MCF 10A (cell line): ENCODE measurements at regions of chr10 and their contacts with region 1.

Region 1: GRCh38 chr10:74151056-74151878 is at the start of gene ADK:
- DNase-seq: peak; percentile 98
- H3K4me3 Mint-ChIP-seq: no peak within 1 kb of the TSS
- H3K27ac Mint-ChIP-seq: no peak within 1 kb of the TSS
- H3K4me1 Mint-ChIP-seq: peaks cover 28% of the 10 kb centered on the region
- H3K27me3 Mint-ChIP-seq: no peaks in the 10 kb centered on the region
- CTCF ChIP-seq: peak; percentile 25
- total RNA-seq, gene ADK: 96.6 and 98.6 TPM in 2 replicates

Region 2: GRCh38 chr10:74137992-74138391 is 13.3 kb before region 1 on chr10:
- CTCF ChIA-PET with region 1: no interaction called
- POLR2A ChIA-PET with region 1: interaction called, 13 read pairs
- intact Hi-C with region 1: no loop called
- DNase-seq: no peak
- H3K4me3 Mint-ChIP-seq: no peak overlapping the region
- H3K27ac Mint-ChIP-seq: no peak overlapping the region
- H3K4me1 Mint-ChIP-seq: no peaks in the 10 kb centered on the region
- H3K27me3 Mint-ChIP-seq: no peaks in the 10 kb centered on the region
- CTCF ChIP-seq: no peak

Region 3: GRCh38 chr10:74176380-74177139 is 25.3 kb after region 1 on chr10:
- CTCF ChIA-PET with region 1: interaction called, 9 read pairs
- POLR2A ChIA-PET with region 1: interaction called, 91 read pairs
- intact Hi-C with region 1: loop called (anchors 1 kb)
- DNase-seq: peak; percentile 96
- H3K4me3 Mint-ChIP-seq: peak overlapping the region; percentile 90
- H3K27ac Mint-ChIP-seq: peak overlapping the region; percentile 96
- H3K4me1 Mint-ChIP-seq: peaks cover 20% of the 10 kb centered on the region
- H3K27me3 Mint-ChIP-seq: no peaks in the 10 kb centered on the region
- CTCF ChIP-seq: no peak

Region 4: GRCh38 chr10:74213571-74214162 is 62.4 kb after region 1 on chr10:
- CTCF ChIA-PET with region 1: interaction called, 8 read pairs
- POLR2A ChIA-PET with region 1: interaction called, 9 read pairs
- intact Hi-C with region 1: loop called (anchors 1 kb)
- DNase-seq: peak; percentile 68
- H3K4me3 Mint-ChIP-seq: no peak overlapping the region
- H3K27ac Mint-ChIP-seq: no peak overlapping the region
- H3K4me1 Mint-ChIP-seq: peaks cover 12% of the 10 kb centered on the region
- H3K27me3 Mint-ChIP-seq: no peaks in the 10 kb centered on the region
- CTCF ChIP-seq: peak; percentile 49

Region 5: GRCh38 chr10:74234569-74234968 is 83.3 kb after region 1 on chr10:
- CTCF ChIA-PET with region 1: interaction called, 14 read pairs
- POLR2A ChIA-PET with region 1: interaction called, 18 read pairs
- intact Hi-C with region 1: loop called (anchors 1 kb)
- DNase-seq: no peak
- H3K4me3 Mint-ChIP-seq: no peak overlapping the region
- H3K27ac Mint-ChIP-seq: no peak overlapping the region
- H3K4me1 Mint-ChIP-seq: peaks cover 16% of the 10 kb centered on the region
- H3K27me3 Mint-ChIP-seq: no peaks in the 10 kb centered on the region
- CTCF ChIP-seq: peak; percentile 42